Activated CD4-positive, alpha-beta T cell treated with anti-CD3 and anti-CD28 coated beads for 36 hours (primary cell): ENCODE measurements at regions of chr17 and their contacts with region 1.

Region 1: GRCh38 chr17:35312790-35313711 is 60.4 kb downstream of the SLFN11 start:
- DNase-seq: peak; percentile 77
- ATAC-seq: peak; percentile 86
- H3K4me3 Mint-ChIP-seq: peak overlapping the region; percentile 73
- H3K27ac Mint-ChIP-seq: peak overlapping the region; percentile 86
- H3K4me1 Mint-ChIP-seq: peaks cover 28% of the 10 kb centered on the region
- H3K27me3 Mint-ChIP-seq: no peaks in the 10 kb centered on the region

Region 2: DNA sequence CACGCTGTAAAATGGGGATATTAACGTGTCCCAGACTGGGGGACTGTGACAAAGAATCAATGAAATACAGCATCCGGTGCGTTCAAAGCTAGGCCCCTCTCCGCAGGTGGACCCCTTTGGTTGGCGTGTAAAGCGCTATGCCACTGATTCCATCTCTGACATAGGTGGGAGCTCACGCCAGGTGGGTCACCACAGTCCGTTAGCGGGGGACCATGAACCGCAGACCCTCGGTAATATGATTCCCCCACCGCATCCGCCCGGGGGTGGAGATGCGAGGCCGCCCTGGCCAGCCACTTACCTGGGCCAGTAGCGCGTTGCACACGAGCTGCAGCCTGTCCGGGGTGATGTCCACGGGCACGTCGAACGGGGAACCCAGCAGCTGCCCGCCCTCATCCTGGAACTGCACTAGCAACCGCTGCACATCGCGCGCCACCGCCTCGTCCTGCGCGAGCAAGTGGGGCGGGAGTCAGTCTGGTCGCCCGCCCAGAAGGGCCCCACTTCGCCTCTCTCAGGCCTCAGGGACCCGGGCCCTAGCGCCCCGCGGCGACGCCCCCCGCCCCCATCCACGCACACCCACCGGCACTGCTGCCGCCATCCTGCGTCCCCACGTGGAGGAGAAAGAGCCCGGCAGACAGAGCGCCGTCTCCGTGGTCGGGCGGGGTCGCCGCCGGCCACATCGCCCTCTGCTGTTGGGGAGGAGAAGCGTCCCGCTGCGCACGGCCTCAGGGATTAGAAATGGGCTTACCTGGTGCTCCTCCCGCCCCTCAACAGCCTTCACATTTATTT is 171.2 kb before region 1 on chr17 and contains the start of gene NLE1:
- CTCF ChIA-PET with region 1: interaction called, 4 read pairs
- POLR2A ChIA-PET with region 1: no interaction called
- intact Hi-C with region 1: loop called in 1 of 2 experiments (anchors 5 kb)
- DNase-seq: peak; percentile 94
- ATAC-seq: peak; percentile 93
- H3K4me3 Mint-ChIP-seq: peak within 1 kb of the TSS; percentile 80
- H3K27ac Mint-ChIP-seq: peak within 1 kb of the TSS; percentile 81
- H3K4me1 Mint-ChIP-seq: peaks cover 14% of the 10 kb centered on the region
- H3K27me3 Mint-ChIP-seq: no peaks in the 10 kb centered on the region
- total RNA-seq, gene NLE1: 38.1 to 40.6 TPM

Region 3: GRCh38 chr17:35161281-35161761 is 151.7 kb before region 1 on chr17:
- CTCF ChIA-PET with region 1: no interaction called
- POLR2A ChIA-PET with region 1: no interaction called
- intact Hi-C with region 1: no loop called
- DNase-seq: no peak
- ATAC-seq: peak; percentile 47
- H3K4me3 Mint-ChIP-seq: peak overlapping the region; percentile 13
- H3K27ac Mint-ChIP-seq: peak overlapping the region; percentile 57
- H3K4me1 Mint-ChIP-seq: peaks cover 48% of the 10 kb centered on the region
- H3K27me3 Mint-ChIP-seq: no peaks in the 10 kb centered on the region

Region 4: DNA sequence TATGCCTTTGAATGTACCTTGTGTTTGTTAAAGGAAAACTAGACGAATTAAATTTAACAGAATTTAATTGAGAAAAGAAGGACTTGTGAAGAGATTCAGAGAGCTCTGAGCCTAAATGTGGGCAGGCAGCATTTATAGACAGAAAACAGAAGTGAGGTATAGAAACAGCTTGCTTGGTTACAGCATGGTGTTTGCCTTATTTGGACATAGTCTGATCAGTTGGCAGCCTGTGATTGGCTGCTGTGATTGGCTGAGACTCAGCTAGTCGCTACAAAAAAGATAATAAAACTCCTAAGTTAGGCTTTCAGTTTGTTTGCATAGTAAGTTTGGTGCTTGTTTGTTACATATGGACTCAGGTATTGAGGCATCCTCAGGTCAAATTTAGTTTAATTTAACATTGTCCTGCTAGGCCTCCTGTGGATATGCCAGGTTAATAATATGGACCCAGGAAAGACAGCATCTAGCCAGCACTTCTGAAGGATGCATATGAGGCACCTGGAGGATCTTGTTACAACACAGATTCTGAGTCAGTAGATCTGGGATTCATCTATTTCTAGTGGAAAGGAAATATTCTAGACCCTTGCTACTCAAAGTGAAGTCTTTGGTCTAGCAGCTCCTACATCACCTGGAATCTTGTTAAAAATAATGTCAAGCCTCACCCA is 26.8 kb before region 1 on chr17:
- CTCF ChIA-PET with region 1: interaction called, 29 read pairs
- POLR2A ChIA-PET with region 1: no interaction called
- intact Hi-C with region 1: no loop called
- DNase-seq: peak; percentile 42
- ATAC-seq: peak; percentile 97
- H3K4me3 Mint-ChIP-seq: no peak overlapping the region
- H3K27ac Mint-ChIP-seq: peak overlapping the region; percentile 27
- H3K4me1 Mint-ChIP-seq: peaks cover 31% of the 10 kb centered on the region
- H3K27me3 Mint-ChIP-seq: no peaks in the 10 kb centered on the region

Region 5: GRCh38 chr17:35345926-35346771 is 33.1 kb after region 1 on chr17:
- CTCF ChIA-PET with region 1: interaction called, 3 read pairs
- POLR2A ChIA-PET with region 1: no interaction called
- intact Hi-C with region 1: loop called in 1 of 2 experiments (anchors 2 kb)
- DNase-seq: peak; percentile 40
- ATAC-seq: peak; percentile 70
- H3K4me3 Mint-ChIP-seq: peak overlapping the region; percentile 73
- H3K27ac Mint-ChIP-seq: peak overlapping the region; percentile 71
- H3K4me1 Mint-ChIP-seq: peaks cover 27% of the 10 kb centered on the region
- H3K27me3 Mint-ChIP-seq: peaks cover 2% of the 10 kb centered on the region

Region 6: GRCh38 chr17:35416659-35417058 is 103.6 kb after region 1 on chr17:
- CTCF ChIA-PET with region 1: no interaction called
- POLR2A ChIA-PET with region 1: no interaction called
- intact Hi-C with region 1: no loop called
- DNase-seq: no peak
- ATAC-seq: no peak
- H3K4me3 Mint-ChIP-seq: no peak overlapping the region
- H3K27ac Mint-ChIP-seq: no peak overlapping the region
- H3K4me1 Mint-ChIP-seq: peaks cover 10% of the 10 kb centered on the region
- H3K27me3 Mint-ChIP-seq: no peaks in the 10 kb centered on the region

Region 7: GRCh38 chr17:35448214-35448898 is 135.3 kb after region 1 on chr17 and contains the start of gene SLFN13:
- CTCF ChIA-PET with region 1: interaction called, 4 read pairs
- POLR2A ChIA-PET with region 1: no interaction called
- intact Hi-C with region 1: loop called (anchors 2 to 5 kb)
- DNase-seq: peak; percentile 97
- ATAC-seq: peak; percentile 97
- H3K4me3 Mint-ChIP-seq: peak within 1 kb of the TSS; percentile 46
- H3K27ac Mint-ChIP-seq: peak within 1 kb of the TSS; percentile 51
- H3K4me1 Mint-ChIP-seq: peaks cover 15% of the 10 kb centered on the region
- H3K27me3 Mint-ChIP-seq: no peaks in the 10 kb centered on the region
- total RNA-seq, gene SLFN13: 18.6 to 22.5 TPM

Region 8: GRCh38 chr17:35521150-35521549 is 208.1 kb after region 1 on chr17:
- CTCF ChIA-PET with region 1: interaction called, 10 read pairs
- POLR2A ChIA-PET with region 1: no interaction called
- intact Hi-C with region 1: no loop called
- DNase-seq: no peak
- ATAC-seq: no peak
- H3K4me3 Mint-ChIP-seq: no peak overlapping the region
- H3K27ac Mint-ChIP-seq: peak overlapping the region; percentile 38
- H3K4me1 Mint-ChIP-seq: peaks cover 90% of the 10 kb centered on the region
- H3K27me3 Mint-ChIP-seq: no peaks in the 10 kb centered on the region

Region 9: DNA sequence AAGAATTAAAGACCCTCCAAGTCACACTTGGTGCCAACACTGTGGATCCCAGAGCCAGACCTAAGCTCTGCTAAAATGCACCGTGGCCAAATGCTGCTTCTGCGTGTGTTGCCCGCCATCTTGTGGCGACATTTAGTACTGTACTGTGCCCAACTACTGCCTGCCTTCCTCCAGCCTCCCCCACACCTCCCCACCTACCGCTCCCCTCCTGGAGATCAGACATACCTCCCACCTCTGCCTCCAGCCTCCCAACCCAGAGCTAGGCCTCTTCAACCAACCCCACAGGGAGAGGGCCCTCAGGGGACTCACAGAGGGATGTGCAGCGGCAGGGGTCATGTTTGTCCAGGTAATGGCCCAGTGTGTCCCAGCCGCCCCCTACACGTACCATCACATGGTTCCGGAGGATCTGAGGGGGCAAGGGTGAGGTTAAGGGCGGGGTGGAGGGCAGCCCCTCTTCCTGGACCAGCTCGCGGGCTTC is 434.5 kb after region 1 on chr17:
- CTCF ChIA-PET with region 1: interaction called, 10 read pairs
- POLR2A ChIA-PET with region 1: no interaction called
- intact Hi-C with region 1: loop called (anchors 1 to 10 kb)
- DNase-seq: peak; percentile 90
- ATAC-seq: peak; percentile 91
- H3K4me3 Mint-ChIP-seq: no peak overlapping the region
- H3K27ac Mint-ChIP-seq: no peak overlapping the region
- H3K4me1 Mint-ChIP-seq: peaks cover 23% of the 10 kb centered on the region
- H3K27me3 Mint-ChIP-seq: peaks cover 33% of the 10 kb centered on the region